ENCODE measurements at regions of chr7 and their contacts with region 1.

Region 1: DNA sequence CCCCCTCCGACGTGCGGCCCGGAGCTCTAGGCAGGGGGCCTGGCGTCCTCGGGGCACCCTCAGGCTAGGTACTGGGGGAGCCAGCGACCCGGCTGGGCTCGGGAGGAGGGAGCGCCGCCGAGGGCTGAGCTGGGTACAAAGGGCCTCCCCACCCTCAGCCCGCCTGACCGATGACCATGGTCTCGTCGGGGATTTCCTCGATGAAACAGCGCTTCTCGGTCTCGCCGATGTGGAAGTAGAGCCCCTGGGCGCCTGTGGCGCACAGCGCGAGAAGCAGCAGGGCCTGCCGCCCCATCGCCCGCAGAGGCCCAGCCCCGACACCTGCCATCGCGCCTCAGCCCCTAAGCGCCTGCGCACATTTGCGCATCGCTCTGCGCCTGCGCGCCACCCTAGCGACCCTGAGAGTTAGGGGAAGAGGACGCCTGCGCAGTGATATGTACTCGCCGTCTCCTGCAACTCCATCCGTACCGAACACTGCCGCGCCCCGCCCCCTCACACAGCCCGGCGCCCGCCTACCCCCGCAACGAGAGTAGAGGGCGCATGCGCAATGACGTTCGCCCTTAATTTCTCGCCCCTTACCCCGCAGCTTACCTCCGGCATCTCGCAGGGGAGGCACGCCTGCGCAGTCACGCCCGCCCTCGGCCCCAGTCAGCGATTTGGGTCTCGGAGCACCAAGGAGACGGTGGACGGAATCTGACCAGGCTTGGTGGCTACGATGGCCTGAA is at the start of gene TMED4:
- DNase-seq: peak; percentile 100
- H3K4me3 Mint-ChIP-seq: peak within 1 kb of the TSS; percentile 91
- H3K27ac Mint-ChIP-seq: peak within 1 kb of the TSS; percentile 91
- H3K4me1 Mint-ChIP-seq: peaks cover 29% of the 10 kb centered on the region
- H3K27me3 Mint-ChIP-seq: peaks cover 3% of the 10 kb centered on the region
- total RNA-seq, gene TMED4: 74.8 to 79.1 TPM

Region 2: GRCh38 chr7:43931346-43931745 is 650.7 kb before region 1 on chr7:
- CTCF ChIA-PET with region 1: no interaction called
- POLR2A ChIA-PET with region 1: no interaction called
- intact Hi-C with region 1: no loop called
- DNase-seq: no peak
- H3K4me3 Mint-ChIP-seq: no peak overlapping the region
- H3K27ac Mint-ChIP-seq: no peak overlapping the region
- H3K4me1 Mint-ChIP-seq: peaks cover 17% of the 10 kb centered on the region
- H3K27me3 Mint-ChIP-seq: no peaks in the 10 kb centered on the region

Region 3: DNA sequence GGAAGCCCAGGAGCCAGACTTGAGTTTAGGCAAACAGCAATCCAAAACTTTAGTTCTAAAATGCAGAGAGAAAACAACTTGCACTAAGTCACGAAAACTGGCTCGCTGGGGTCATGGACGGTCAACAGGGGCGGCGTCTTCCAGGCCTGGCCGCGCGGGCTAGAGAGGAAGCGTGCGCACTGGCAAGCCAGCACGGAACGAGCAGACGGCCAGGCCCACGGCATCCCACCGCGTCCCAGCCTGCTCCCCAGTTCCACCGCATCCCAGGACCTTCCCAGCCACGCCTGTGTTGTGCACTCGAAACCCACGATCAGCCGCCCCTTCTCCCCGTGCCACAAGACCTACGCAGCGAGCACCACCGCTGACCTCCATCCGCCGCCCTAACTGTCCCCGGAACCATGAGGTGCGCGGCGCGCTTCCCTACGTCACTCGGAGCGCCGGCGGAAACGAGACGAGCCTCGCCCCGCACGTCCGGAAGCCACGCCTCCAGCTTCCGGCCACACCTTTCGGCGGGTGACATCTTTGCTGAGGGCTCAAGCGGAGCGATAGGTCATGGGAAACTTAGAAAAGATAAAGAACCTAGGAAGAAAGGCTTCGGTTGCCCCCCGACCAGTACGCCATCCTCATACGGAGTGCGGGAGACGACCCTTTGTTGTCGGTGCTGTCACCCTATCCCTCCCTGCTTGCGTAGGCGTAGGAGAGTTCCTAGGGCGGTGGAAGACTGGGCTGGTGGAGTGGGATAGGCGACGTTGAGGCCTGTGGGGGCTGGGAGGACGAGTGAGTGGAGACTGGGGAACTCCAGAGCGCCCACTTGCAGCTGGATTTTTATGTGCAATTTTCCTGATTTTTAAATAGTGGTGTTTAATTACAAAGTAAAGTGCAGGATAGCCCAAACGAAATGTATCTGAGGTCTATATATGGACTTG is 529.5 kb after region 1 on chr7 and contains the start of gene TBRG4:
- CTCF ChIA-PET with region 1: no interaction called
- POLR2A ChIA-PET with region 1: interaction called, 4 read pairs
- intact Hi-C with region 1: loop called (anchors 2 kb)
- DNase-seq: peak; percentile 96
- H3K4me3 Mint-ChIP-seq: peak within 1 kb of the TSS; percentile 96
- H3K27ac Mint-ChIP-seq: peak within 1 kb of the TSS; percentile 94
- H3K4me1 Mint-ChIP-seq: peaks cover 40% of the 10 kb centered on the region
- H3K27me3 Mint-ChIP-seq: no peaks in the 10 kb centered on the region
- total RNA-seq, gene TBRG4: 135 to 137 TPM